Activated CD4-positive, alpha-beta memory T cell treated with anti-CD3 and anti-CD28 coated beads, Interleukin-2, amount 10 ng/mL, durations not matched to agents 7 days and 5 days (primary cell): ENCODE measurements at regions of chr16 and their contacts with region 1.

Region 1: GRCh38 chr16:75064403-75065148 is 52.0 kb downstream of the LDHD start:
- DNase-seq: peak; percentile 30
- H3K4me3 Mint-ChIP-seq: peak overlapping the region; percentile 56
- H3K27ac Mint-ChIP-seq: peak overlapping the region; percentile 71
- H3K4me1 Mint-ChIP-seq: peaks cover 26% of the 10 kb centered on the region
- H3K27me3 Mint-ChIP-seq: no peaks in the 10 kb centered on the region

Region 2: GRCh38 chr16:75074920-75075687 is 10.5 kb after region 1 on chr16:
- CTCF ChIA-PET with region 1: interaction called, 5 read pairs
- POLR2A ChIA-PET with region 1: interaction called, 15 read pairs
- DNase-seq: peak; percentile 94
- H3K4me3 Mint-ChIP-seq: peak overlapping the region; percentile 33
- H3K27ac Mint-ChIP-seq: peak overlapping the region; percentile 87
- H3K4me1 Mint-ChIP-seq: peaks cover 58% of the 10 kb centered on the region
- H3K27me3 Mint-ChIP-seq: no peaks in the 10 kb centered on the region